ENCODE measurements at regions of chr5 and their contacts with region 1.

Region 1: GRCh38 chr5:60586307-60586901 is 113.6 kb downstream of the DEPDC1B start:
- DNase-seq: no peak
- H3K4me3 ChIP-seq: no peak overlapping the region
- H3K27ac ChIP-seq: no peak overlapping the region
- H3K4me1 ChIP-seq: no peaks in the 10 kb centered on the region
- H3K27me3 ChIP-seq: no peaks in the 10 kb centered on the region
- CTCF ChIP-seq: peak; percentile 67

Region 2: DNA sequence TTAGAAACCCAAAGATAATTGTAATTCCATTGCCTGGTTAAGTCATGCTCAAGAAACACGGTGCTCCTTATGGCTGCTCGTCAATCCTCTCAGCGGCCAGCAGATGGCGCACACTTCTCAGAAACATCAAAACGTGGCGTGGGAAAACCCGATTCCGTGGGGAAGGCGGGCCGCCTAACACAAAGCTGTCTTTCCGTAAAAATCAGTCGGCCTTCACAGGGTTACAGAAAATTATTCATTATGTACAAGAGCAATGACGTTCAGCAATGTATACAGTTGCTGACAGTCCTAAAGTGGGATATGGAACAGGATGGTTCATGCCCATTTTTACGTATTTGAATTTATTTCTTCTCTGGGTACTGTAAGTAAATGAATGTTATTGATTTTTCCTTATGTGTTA is 776.4 kb before region 1 on chr5:
- intact Hi-C with region 1: loop called (anchors 10 kb)
- DNase-seq: peak; percentile 68
- H3K4me3 ChIP-seq: peak overlapping the region; percentile 31
- H3K27ac ChIP-seq: no peak overlapping the region
- H3K4me1 ChIP-seq: peaks cover 6% of the 10 kb centered on the region
- H3K27me3 ChIP-seq: peaks cover 24% of the 10 kb centered on the region
- CTCF ChIP-seq: peak; percentile 95

Region 3: DNA sequence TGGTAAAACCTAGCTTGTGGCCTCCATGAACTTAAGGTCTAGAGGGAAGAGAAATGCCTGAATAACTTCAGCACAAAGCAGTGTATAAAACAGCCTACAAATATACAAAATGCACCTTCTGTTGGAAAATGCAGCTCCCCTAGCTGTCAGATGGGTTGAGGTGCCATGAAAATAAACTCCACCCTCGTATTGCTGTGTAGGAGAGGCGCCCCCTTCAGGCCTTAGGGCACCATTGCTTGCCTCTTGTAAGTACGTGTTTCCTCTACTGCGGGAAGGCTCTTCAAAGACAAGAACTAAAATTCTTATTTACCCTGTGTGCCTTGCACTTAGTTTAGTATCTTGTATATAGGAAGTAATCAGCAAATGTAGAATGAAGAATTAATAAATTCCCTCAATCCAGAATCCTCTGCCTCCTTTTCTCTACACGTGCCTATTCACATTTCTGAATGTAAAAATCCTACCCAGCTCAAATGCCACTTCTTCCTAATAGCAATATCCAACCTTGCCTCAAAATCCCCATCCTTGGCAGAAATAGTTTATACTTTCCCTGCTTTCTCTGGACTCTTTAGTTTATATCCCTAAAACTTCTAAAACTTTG is 299.1 kb before region 1 on chr5:
- intact Hi-C with region 1: loop called (anchors 10 kb)
- DNase-seq: peak; percentile 24
- H3K4me3 ChIP-seq: no peak overlapping the region
- H3K27ac ChIP-seq: no peak overlapping the region
- H3K4me1 ChIP-seq: no peaks in the 10 kb centered on the region
- H3K27me3 ChIP-seq: no peaks in the 10 kb centered on the region
- CTCF ChIP-seq: peak; percentile 45

Region 4: GRCh38 chr5:61082516-61083280 is 496.3 kb after region 1 on chr5:
- intact Hi-C with region 1: no loop called
- DNase-seq: no peak
- H3K4me3 ChIP-seq: no peak overlapping the region
- H3K27ac ChIP-seq: no peak overlapping the region
- H3K4me1 ChIP-seq: no peaks in the 10 kb centered on the region
- H3K27me3 ChIP-seq: no peaks in the 10 kb centered on the region
- CTCF ChIP-seq: no peak

Region 5: GRCh38 chr5:62017092-62017491 is 1430.7 kb after region 1 on chr5:
- intact Hi-C with region 1: no loop called
- DNase-seq: no peak
- H3K4me3 ChIP-seq: no peak overlapping the region
- H3K27ac ChIP-seq: no peak overlapping the region
- H3K4me1 ChIP-seq: no peaks in the 10 kb centered on the region
- H3K27me3 ChIP-seq: no peaks in the 10 kb centered on the region
- CTCF ChIP-seq: no peak